Psoas muscle (tissue), 8 donors: ENCODE measurements at regions of chr10 and their contacts with region 1.

Region 1: GRCh38 chr10:92450896-92451295 is 123.0 kb downstream of the IDE start:
- DNase-seq: no peak
- ATAC-seq: no peak
- H3K4me3 ChIP-seq: no peak overlapping the region
- H3K27ac ChIP-seq: no peak overlapping the region
- H3K4me1 ChIP-seq: no peaks in the 10 kb centered on the region
- H3K27me3 ChIP-seq: no peaks in the 10 kb centered on the region
- CTCF ChIP-seq: no peak

Region 2: DNA sequence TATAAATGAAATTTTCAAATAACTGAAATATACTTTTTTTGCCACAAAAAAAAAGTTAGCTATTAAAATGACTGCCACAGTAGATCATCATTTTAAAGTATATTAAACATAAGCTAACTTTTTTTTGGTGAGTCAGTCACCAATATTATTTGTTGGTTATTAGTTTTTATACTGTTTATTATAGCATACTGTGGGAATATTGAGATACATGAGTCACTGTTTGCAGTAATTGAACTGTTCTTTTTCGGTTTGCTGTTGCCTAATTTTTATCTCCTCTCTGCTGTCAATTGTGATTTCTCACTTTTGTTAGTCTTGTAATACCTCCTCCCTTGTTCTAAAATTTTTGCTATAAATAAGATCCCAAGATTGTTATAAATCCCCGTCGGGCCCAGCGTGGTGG is 481.6 kb before region 1 on chr10:
- intact Hi-C with region 1: loop called in 1 of 2 experiments (anchors 10 kb)
- DNase-seq: no peak
- ATAC-seq: no peak
- H3K4me3 ChIP-seq: no peak overlapping the region
- H3K27ac ChIP-seq: no peak overlapping the region
- H3K4me1 ChIP-seq: no peaks in the 10 kb centered on the region
- H3K27me3 ChIP-seq: no peaks in the 10 kb centered on the region
- CTCF ChIP-seq: no peak

Region 3: DNA sequence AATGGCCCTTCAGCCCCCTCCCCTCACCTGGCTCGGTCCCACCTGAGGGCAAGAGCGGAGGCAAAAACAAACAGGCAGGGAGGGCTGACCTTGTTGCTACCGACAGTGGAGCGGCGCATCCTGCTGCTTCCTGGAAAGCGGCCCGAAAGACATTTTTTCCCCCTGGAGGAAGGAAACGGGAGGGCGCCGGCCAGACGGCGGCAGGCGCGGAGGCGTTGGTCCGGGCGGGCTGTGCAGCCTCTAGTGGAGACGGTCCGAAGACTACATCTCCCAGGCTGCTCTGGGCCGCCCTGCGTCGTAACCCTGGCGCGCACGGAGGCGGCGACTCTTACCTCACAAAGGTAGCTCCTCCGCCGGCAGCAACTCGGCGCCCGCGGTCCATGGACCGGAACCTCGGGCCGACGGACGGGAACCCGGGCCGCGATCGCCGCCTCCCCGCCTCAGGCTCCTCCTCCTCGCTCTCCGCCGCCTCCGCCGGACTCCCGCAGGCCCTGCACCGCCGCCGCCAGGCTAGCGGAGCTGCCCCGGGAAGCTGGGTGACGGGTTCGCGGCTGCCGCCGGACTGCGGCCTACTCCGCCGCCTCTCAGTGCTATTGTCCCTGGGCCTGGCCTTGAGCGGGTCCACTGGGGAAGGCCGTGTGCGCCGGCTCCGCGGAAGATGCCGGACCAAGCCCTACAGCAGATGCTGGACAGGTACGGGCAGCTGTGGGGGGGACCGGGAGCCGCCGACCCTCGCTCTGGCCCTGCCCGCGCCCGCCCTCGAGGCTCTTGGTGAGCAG is 159.9 kb before region 1 on chr10 and contains the starts of genes CPEB3 and MARCHF5:
- intact Hi-C with region 1: no loop called
- DNase-seq: peak; percentile 96 to 98
- ATAC-seq: peak; percentile 96 to 99 (median 98)
- H3K4me3 ChIP-seq: peak within 1 kb of the TSS; percentile 90
- H3K27ac ChIP-seq: peak within 1 kb of the TSS; percentile 95
- H3K4me1 ChIP-seq: peaks cover 5% of the 10 kb centered on the region
- H3K27me3 ChIP-seq: no peaks in the 10 kb centered on the region
- CTCF ChIP-seq: peak; percentile 78
- total RNA-seq, gene CPEB3: 6.1 to 16.9 (median 14.3) TPM
- total RNA-seq, gene MARCHF5: 28.3 to 52.3 (median 32.9) TPM